ENCODE measurements at regions of chr1 and their contacts with region 1.

Region 1: DNA sequence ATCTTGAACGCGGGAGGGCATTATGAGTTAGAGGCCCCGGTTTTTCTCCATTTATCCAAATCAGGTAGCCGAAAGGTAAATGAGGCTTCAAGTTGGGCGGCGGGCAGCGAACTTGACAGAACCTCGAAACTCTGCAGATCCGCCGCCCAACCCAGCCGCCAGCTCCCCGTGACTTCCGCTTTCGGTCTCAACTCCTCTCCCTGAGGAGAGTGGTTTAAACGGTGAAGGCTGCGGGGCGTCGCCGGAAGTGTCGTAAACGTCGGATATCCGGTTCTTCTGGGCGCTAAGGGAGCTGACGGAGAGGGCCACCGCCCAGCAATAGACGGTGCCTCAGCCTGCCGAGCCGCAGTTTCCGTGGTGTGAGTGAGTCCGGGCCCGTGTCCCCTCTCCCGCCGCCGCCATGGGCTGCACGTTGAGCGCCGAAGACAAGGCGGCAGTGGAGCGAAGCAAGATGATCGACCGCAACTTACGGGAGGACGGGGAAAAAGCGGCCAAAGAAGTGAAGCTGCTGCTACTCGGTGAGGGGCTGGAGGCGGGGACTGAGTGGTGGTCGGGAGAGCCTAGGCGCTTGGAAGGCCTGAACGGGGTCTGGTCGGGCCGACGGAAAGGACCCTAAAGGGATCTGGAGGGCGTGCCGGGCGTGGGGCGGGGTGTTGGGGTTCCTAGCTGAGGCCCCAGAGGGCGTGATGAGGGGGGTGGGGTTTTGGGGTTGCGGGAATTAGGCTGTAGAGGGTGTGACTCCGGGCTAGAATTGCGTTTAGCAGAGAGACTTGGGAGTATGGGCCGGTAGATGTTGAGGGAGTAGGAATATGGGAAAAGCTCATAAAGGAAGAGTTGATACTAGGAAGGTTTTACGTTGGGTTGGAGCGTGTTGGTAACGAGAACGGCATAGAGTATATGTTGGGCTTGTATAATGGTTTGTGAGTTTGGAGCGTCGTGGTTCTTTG is at the start of gene GNAI3:
- DNase-seq: peak; percentile 96
- ATAC-seq: peak; percentile 97
- total RNA-seq, gene GNAI3: 2.2 TPM

Region 2: DNA sequence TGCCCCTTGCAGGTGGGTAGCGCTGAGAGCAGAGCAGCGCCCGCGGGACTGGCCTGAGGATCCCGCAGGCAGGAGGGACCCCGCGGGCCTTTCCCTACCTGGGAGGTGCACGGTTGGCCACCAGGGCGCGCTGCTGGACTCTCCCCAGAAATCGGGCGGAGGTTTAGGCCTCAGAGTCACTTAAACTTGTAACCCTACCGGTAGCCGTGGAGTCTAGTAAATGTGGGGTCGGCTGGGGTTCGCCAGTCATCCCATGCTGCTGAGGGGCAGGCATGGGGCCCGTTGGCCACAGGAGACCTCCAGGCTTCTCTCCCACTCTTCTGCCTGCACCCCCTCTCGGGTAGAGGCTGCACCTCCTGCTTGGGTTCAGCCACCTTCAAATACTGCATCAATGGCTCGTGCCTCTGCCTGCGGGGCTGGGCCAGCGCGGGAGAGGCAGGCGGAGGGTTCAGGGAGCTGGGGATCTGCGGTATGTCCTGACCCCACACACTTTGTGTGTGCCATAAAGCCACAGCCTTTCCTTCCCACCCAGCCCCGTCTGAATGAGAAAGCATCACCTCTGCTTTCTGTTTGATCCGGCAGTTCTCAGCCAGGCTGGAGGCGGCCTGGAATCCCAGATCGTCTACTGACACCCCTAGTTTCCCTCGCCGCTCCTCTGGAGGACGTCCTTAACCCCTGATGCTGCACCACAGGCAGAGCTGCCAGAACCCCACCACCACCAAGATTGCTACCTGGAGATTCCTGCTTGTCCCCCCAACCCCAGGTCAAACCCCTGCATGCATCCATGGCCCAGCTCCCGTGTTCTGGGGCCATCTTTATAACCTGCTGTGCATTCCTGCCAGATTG is 95.0 kb after region 1 on chr1:
- intact Hi-C with region 1: loop called (anchors 5 kb)
- DNase-seq: peak; percentile 91
- ATAC-seq: peak; percentile 90